Breast epithelium (tissue), 4 donors: ENCODE measurements at regions of chr6 and their contacts with region 1.

Region 1: DNA sequence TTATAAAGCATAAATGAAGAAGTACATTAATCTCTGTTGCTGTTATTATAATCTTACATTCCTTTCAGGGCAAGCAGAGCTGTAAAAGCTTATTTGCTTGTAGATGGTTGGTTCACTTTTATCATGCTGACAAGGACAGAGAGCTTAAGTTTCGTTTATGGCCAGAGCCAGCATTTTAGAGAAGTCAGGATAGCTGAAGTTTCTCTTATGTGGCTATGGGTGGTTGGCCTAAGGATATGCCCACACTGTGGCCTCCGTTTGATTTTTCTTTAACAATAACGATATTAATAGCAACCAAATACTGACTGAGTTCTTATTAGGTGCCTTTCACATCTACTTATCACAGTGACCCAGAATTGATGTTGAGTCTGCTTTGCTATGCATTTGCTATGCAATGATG is 78.5 kb downstream of the FARS2 start:
- DNase-seq: no peak
- H3K4me3 ChIP-seq: no peak overlapping the region
- H3K27ac ChIP-seq: no peak overlapping the region
- H3K4me1 ChIP-seq: peaks cover 0 to 6% of the 10 kb centered on the region in 2 donors
- H3K27me3 ChIP-seq: no peaks in the 10 kb centered on the region
- CTCF ChIP-seq: no peak
- POLR2A ChIP-seq: no peak

Region 2: DNA sequence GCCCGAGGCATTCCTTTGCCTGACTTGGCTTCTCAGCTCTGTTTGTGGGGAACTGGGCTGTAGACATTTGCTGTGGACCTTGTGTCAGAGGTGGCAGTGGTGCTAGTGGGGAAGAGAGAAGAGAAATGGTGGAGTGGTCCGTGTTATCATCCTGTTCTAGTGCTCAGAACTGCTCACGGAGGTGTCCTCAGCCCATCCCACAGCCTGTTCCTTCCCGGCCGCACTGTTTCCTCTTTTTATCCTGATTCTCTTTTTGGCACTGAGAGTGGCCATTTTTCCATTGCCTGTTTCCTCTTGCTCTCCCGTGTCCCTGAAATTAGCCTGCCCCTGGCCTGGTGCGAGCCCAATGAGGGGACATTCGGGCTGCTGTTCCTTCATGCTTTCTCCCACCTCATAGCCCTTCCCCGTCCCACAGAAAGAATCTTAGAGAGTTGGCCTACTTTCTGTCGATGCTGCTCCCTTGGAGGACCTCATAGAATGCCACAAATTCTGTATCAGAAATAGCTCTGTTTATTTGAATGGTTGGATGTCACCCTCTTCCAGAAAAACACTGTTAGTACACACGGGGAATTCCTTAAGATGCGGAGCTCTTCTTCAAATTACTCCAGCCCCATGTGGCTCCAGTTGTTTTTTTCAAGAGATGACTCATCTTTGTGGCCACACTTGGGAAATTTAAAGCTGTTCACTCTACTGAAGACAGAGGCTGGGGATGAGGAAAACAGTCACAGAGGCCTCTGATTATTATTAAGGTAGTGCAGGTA is 52.4 kb before region 1 on chr6:
- intact Hi-C with region 1: loop called (anchors 2 kb)
- DNase-seq: no peak
- H3K4me3 ChIP-seq: peak overlapping the region in 2 of 3 donors; percentile 9 to 39
- H3K27ac ChIP-seq: peak overlapping the region; percentile 60 to 84
- H3K4me1 ChIP-seq: no peaks in the 10 kb centered on the region
- H3K27me3 ChIP-seq: no peaks in the 10 kb centered on the region
- CTCF ChIP-seq: no peak
- POLR2A ChIP-seq: no peak